ENCODE measurements at regions of chr7 and their contacts with region 1.

Region 1: GRCh38 chr7:127347567-127348246 is 44.8 kb downstream of the ZNF800 start:
- DNase-seq: peak; percentile 87
- ATAC-seq: peak; percentile 98
- H3K4me3 Mint-ChIP-seq: peak overlapping the region; percentile 37
- H3K27ac Mint-ChIP-seq: no peak overlapping the region
- H3K4me1 Mint-ChIP-seq: peaks cover 21% of the 10 kb centered on the region
- H3K27me3 Mint-ChIP-seq: peaks cover 5% of the 10 kb centered on the region

Region 2: GRCh38 chr7:127150543-127150942 is 197.2 kb before region 1 on chr7:
- CTCF ChIA-PET with region 1: no interaction called
- POLR2A ChIA-PET with region 1: no interaction called
- intact Hi-C with region 1: no loop called
- DNase-seq: no peak
- ATAC-seq: no peak
- H3K4me3 Mint-ChIP-seq: no peak overlapping the region
- H3K27ac Mint-ChIP-seq: no peak overlapping the region
- H3K4me1 Mint-ChIP-seq: no peaks in the 10 kb centered on the region
- H3K27me3 Mint-ChIP-seq: peaks cover 7% of the 10 kb centered on the region

Region 3: DNA sequence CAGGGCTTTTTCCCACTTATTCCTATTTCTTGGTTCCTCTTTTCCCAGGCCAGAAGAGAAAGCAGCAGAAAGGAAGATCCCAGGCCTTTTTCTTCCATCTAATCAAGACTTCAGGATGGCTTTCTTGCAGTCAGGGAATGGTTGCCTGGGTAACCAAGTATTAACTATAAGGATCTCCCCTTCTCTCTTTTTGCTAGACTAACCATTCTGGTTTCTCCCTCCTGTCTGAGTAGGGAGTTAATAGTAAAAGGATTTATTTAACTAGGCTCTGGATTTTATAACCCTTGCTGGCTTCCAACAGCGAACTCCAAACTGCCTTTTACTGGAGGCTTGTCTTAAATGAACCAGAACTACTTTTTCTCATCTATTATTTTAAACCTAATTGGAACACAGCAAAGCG is 185.3 kb before region 1 on chr7:
- CTCF ChIA-PET with region 1: no interaction called
- POLR2A ChIA-PET with region 1: no interaction called
- intact Hi-C with region 1: no loop called
- DNase-seq: no peak
- ATAC-seq: no peak
- H3K4me3 Mint-ChIP-seq: no peak overlapping the region
- H3K27ac Mint-ChIP-seq: no peak overlapping the region
- H3K4me1 Mint-ChIP-seq: no peaks in the 10 kb centered on the region
- H3K27me3 Mint-ChIP-seq: peaks cover 13% of the 10 kb centered on the region

Region 4: GRCh38 chr7:127404286-127405072 is 56.8 kb after region 1 on chr7:
- CTCF ChIA-PET with region 1: interaction called, 6 read pairs
- POLR2A ChIA-PET with region 1: no interaction called
- intact Hi-C with region 1: loop called (anchors 1 to 5 kb)
- DNase-seq: no peak
- ATAC-seq: peak; percentile 87
- H3K4me3 Mint-ChIP-seq: peak overlapping the region; percentile 39
- H3K27ac Mint-ChIP-seq: peak overlapping the region; percentile 63
- H3K4me1 Mint-ChIP-seq: peaks cover 18% of the 10 kb centered on the region
- H3K27me3 Mint-ChIP-seq: peaks cover 3% of the 10 kb centered on the region

Region 5: GRCh38 chr7:127447326-127447945 is 99.7 kb after region 1 on chr7:
- CTCF ChIA-PET with region 1: interaction called, 10 read pairs
- POLR2A ChIA-PET with region 1: no interaction called
- intact Hi-C with region 1: loop called (anchors 1 to 2 kb)
- DNase-seq: peak; percentile 63
- ATAC-seq: peak; percentile 98
- H3K4me3 Mint-ChIP-seq: no peak overlapping the region
- H3K27ac Mint-ChIP-seq: no peak overlapping the region
- H3K4me1 Mint-ChIP-seq: peaks cover 17% of the 10 kb centered on the region
- H3K27me3 Mint-ChIP-seq: peaks cover 5% of the 10 kb centered on the region

Region 6: GRCh38 chr7:127514499-127514898 is 166.8 kb after region 1 on chr7:
- CTCF ChIA-PET with region 1: interaction called, 5 read pairs
- POLR2A ChIA-PET with region 1: no interaction called
- intact Hi-C with region 1: loop called in 1 of 2 experiments (anchors 1 kb)
- DNase-seq: no peak
- ATAC-seq: peak; percentile 49
- H3K4me3 Mint-ChIP-seq: no peak overlapping the region
- H3K27ac Mint-ChIP-seq: no peak overlapping the region
- H3K4me1 Mint-ChIP-seq: no peaks in the 10 kb centered on the region
- H3K27me3 Mint-ChIP-seq: peaks cover 11% of the 10 kb centered on the region

Region 7: DNA sequence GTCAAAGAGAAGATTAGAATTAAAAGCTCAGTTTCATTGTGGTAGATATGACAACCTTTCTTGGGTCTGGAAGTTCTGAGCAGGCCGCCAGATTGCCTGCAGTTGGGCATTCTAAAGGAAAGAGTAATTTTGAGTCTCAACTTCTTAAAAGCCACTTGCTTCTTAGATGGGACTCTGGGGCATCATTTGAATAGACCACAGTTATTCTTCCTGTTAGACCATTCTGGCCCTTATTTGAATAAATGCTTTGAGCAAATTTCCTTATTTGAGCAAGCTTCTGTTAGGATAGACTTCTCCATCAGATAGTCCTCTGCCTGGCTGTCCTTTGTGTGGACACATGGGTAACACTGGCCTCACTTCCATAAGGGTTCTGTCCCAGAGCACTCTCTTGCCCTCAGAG is 344.5 kb after region 1 on chr7:
- CTCF ChIA-PET with region 1: no interaction called
- POLR2A ChIA-PET with region 1: no interaction called
- intact Hi-C with region 1: no loop called
- DNase-seq: no peak
- ATAC-seq: no peak
- H3K4me3 Mint-ChIP-seq: no peak overlapping the region
- H3K27ac Mint-ChIP-seq: no peak overlapping the region
- H3K4me1 Mint-ChIP-seq: peaks cover 9% of the 10 kb centered on the region
- H3K27me3 Mint-ChIP-seq: no peaks in the 10 kb centered on the region

Region 8: DNA sequence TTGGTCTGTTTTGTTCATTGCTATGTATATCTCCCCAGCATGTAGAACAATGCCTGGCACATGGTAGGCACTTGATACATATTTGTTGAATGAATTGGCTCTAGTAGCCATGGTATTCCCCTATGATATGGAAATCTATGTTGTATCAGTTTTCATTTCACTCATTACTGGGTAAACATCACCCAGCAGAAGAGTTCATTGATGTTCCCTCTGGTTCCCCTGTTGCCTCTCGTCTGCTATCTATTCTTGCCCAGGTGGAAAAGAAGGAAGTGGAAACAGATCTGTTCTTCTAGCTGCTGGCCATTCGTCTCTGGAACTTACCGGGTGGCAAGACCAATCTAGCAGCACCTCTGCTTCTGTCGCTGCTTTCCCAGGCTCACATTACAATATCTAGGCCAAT is 612.1 kb after region 1 on chr7:
- CTCF ChIA-PET with region 1: no interaction called
- POLR2A ChIA-PET with region 1: no interaction called
- intact Hi-C with region 1: no loop called
- DNase-seq: no peak
- ATAC-seq: peak; percentile 53
- H3K4me3 Mint-ChIP-seq: no peak overlapping the region
- H3K27ac Mint-ChIP-seq: no peak overlapping the region
- H3K4me1 Mint-ChIP-seq: peaks cover 8% of the 10 kb centered on the region
- H3K27me3 Mint-ChIP-seq: no peaks in the 10 kb centered on the region

Measured in activated CD4-positive, alpha-beta T cell treated with anti-CD3 and anti-CD28 coated beads for 36 hours (primary cell).